ENCODE measurements at regions of chr4 and their contacts with region 1.

Region 1: GRCh38 chr4:165207431-165208220 is at the start of gene KLHL2:
- DNase-seq: peak; percentile 80
- H3K4me3 ChIP-seq: peak within 1 kb of the TSS; percentile 95 to 98 (median 97)
- H3K27ac ChIP-seq: peak within 1 kb of the TSS; percentile 58
- H3K4me1 ChIP-seq: peaks cover 22% of the 10 kb centered on the region
- H3K27me3 ChIP-seq: no peaks in the 10 kb centered on the region
- CTCF ChIP-seq: no peak
- POLR2A ChIP-seq: peak; percentile 73
- total RNA-seq, gene KLHL2: 22.1 and 22.9 TPM in 2 replicates

Region 2: DNA sequence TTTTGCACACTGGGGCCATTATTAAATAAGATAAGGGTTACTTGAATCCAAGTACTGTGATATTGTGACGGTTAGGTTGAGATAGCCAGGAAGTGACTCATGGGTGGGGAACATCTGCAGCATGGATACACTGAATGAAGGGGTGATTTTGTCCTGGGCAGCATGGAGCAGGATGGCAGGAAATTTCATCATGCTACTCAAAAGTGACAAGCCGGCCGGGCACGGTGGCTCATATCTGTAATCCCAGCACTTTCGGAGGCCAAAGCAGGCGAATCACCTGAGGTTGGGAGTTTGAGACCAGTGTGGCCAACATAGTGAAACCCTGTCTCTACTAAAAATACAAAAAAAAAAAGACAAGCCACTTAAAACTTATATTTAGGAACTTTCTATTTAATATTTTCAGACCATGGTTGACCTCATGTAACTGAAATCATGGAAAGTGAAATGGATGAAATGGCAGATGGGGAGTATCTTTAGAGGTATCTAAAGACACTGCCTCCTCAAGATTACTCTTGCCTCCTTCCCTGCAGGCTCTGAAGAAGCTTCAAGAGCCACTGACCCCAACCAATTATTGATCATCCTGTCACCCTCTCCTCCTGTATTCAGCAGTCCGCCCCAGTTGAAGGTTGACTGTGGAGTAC is 179.7 kb before region 1 on chr4:
- CTCF ChIA-PET with region 1: no interaction called
- POLR2A ChIA-PET with region 1: no interaction called
- dilution Hi-C with region 1: no loop called
- intact Hi-C with region 1: no loop called
- DNase-seq: no peak
- H3K4me3 ChIP-seq: no peak overlapping the region
- H3K27ac ChIP-seq: no peak overlapping the region
- H3K4me1 ChIP-seq: no peaks in the 10 kb centered on the region
- H3K27me3 ChIP-seq: no peaks in the 10 kb centered on the region
- CTCF ChIP-seq: no peak
- POLR2A ChIP-seq: no peak

Region 3: GRCh38 chr4:165222651-165222994 is 15.0 kb after region 1 on chr4:
- CTCF ChIA-PET with region 1: interaction called, 3 read pairs
- POLR2A ChIA-PET with region 1: no interaction called
- dilution Hi-C with region 1: no loop called
- intact Hi-C with region 1: loop called (anchors 1 kb)
- DNase-seq: peak; percentile 90
- H3K4me3 ChIP-seq: no peak overlapping the region
- H3K27ac ChIP-seq: peak overlapping the region; percentile 96
- H3K4me1 ChIP-seq: peaks cover 20% of the 10 kb centered on the region
- H3K27me3 ChIP-seq: no peaks in the 10 kb centered on the region
- CTCF ChIP-seq: no peak
- POLR2A ChIP-seq: no peak

Region 4: DNA sequence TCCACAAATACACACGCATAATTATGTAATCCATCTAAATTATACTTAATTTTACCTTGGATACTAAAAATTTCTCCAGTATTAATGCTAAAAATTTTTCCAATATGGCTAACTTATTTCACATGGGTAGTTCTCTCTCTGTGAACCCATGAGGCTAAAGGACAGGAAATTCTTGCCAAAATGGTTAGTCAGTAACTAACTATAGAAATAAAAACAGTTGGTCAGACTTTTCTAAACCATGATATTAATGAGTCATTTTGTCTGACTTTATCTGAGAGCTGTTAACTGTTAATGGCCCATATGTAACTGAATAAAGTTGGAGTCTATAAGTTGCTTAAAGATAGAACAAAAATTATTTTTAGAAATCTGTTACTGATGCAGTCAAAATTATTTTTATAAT is 1214.8 kb after region 1 on chr4:
- CTCF ChIA-PET with region 1: no interaction called
- POLR2A ChIA-PET with region 1: no interaction called
- dilution Hi-C with region 1: no loop called
- intact Hi-C with region 1: no loop called
- DNase-seq: peak; percentile 7
- H3K4me3 ChIP-seq: no peak overlapping the region
- H3K27ac ChIP-seq: no peak overlapping the region
- H3K4me1 ChIP-seq: no peaks in the 10 kb centered on the region
- H3K27me3 ChIP-seq: no peaks in the 10 kb centered on the region
- CTCF ChIP-seq: no peak
- POLR2A ChIP-seq: no peak

Measured in endothelial cell of umbilical vein (primary cell).